ENCODE measurements at regions of chr15 and their contacts with region 1.

Region 1: DNA sequence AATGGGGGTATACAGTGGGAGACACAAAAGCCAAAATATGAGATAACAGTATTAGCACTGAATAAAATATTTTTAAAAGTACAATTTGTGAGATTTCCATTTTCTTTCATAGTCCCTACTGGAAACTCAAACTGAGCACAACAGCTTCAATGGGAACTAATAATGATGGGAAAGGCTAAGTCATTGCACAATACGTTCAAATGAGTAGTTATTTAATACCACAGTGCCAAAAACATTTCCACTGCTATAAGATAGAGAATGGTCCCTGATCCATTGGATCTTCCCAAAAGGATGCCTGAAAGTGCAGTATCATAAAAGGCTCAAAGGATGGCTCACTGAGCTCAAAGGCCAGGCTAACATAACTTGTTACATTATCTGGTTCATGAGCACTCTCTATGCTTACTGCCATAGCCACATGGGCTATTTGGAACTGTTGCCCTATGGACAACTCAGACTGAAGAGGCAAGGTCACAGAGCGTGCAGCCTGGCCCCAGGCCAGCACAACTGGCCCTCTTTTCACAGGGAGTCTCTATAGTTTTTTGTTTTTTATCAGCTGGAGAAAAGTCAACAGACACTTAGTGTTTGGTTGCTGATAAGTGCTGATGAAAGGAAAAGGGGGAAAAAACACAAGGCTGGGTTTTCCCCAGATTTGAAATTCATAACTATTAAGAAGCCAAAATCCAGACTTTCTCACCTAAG is 54.1 kb upstream of the PPIB start:
- DNase-seq: no peak
- H3K4me3 ChIP-seq: no peak overlapping the region
- H3K27ac ChIP-seq: no peak overlapping the region
- H3K4me1 ChIP-seq: no peaks in the 10 kb centered on the region
- H3K27me3 ChIP-seq: no peaks in the 10 kb centered on the region
- CTCF ChIP-seq: no peak

Region 2: GRCh38 chr15:64182859-64183370 is 34.0 kb before region 1 on chr15:
- CTCF ChIA-PET with region 1: no interaction called
- POLR2A ChIA-PET with region 1: no interaction called
- intact Hi-C with region 1: no loop called
- DNase-seq: no peak
- H3K4me3 ChIP-seq: no peak overlapping the region
- H3K27ac ChIP-seq: no peak overlapping the region
- H3K4me1 ChIP-seq: no peaks in the 10 kb centered on the region
- H3K27me3 ChIP-seq: no peaks in the 10 kb centered on the region
- CTCF ChIP-seq: no peak

Region 3: DNA sequence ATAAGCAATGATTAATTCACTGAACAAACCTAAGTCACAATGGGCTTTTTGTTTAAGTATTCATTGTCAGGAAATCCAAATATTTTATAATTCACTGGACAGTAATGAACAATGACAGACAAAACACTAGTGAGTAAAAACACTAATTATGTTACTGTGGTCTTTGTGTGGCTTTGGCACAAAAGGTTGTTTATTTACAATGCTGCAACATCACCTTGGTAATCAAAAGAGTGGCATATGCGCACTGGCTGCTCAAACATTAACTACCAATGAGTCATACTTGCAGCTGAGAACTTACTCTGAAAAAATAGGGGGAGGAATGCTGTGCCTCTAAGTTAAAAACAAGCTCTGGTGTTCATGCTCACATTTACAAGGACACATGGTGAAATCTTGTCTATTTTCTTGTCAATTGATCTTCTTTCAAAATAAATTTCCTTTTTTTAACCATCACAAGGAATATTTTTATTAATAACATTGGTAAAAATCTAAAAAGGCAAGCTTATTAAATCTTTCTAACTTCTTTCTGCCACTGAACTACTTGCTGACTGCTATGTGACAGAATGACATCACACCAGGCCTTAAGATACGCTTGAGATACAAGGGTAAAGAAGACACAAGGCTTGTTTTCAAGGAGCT is 31.1 kb after region 1 on chr15:
- CTCF ChIA-PET with region 1: no interaction called
- POLR2A ChIA-PET with region 1: interaction called, 18 read pairs
- intact Hi-C with region 1: no loop called
- DNase-seq: peak; percentile 48 to 92
- H3K4me3 ChIP-seq: no peak overlapping the region
- H3K27ac ChIP-seq: peak overlapping the region; percentile 70
- H3K4me1 ChIP-seq: peaks cover 47% of the 10 kb centered on the region
- H3K27me3 ChIP-seq: no peaks in the 10 kb centered on the region
- CTCF ChIP-seq: no peak